Right ventricle myocardium inferior (tissue), 1 donor: ENCODE measurements at regions of chr4 and their contacts with region 1.

Region 1: GRCh38 chr4:165112368-165113139 is at the start of gene TMEM192:
- DNase-seq: peak; percentile 96
- ATAC-seq: peak; percentile 100
- total RNA-seq, gene TMEM192: 14.9 TPM

Region 2: GRCh38 chr4:165070560-165070959 is 42.0 kb before region 1 on chr4:
- intact Hi-C with region 1: no loop called
- DNase-seq: no peak
- ATAC-seq: no peak

Region 3: GRCh38 chr4:165327211-165328100 is 214.9 kb after region 1 on chr4 and contains the start of gene MSMO1:
- intact Hi-C with region 1: loop called (anchors 2 kb)
- DNase-seq: peak; percentile 100
- ATAC-seq: peak; percentile 100
- total RNA-seq, gene MSMO1: 8.5 TPM

Region 4: DNA sequence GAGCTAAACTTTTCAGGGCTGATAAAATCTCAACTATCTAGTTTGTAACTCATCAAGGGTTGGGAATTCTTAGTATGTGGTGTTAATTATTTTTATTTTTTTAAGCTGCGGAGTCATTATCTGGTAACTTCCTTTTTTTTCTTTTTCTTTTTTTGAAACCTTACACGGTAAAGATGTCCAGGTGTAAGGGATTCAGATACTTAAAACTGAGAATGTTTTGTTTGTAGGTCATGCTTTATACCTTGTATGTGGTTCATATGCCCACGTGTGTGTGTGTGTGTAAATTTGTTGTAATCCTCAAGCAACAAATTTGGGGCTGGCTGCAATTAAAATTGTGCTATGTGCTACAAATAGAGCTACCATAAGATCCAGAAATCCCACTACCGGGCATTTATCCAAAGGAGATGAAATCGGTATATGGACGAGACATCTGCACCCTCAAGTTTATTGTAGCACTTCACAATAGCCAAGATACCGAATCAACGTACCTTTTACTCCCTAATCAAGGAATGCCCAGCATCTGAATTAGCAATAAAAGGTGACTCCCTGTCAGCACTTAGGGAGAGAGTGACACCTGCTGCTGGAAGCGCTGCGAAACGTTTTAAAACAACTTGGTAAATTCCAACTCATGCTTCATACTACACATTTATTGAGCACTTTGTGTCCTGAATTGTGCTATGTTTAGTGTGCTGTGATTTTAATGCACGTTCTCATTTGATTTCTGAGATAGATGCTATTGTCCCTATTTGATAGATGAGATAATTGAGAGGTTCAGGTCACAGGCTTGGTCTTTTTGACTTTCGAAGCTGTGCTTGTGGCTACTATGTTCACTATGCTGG is 231.0 kb after region 1 on chr4:
- intact Hi-C with region 1: no loop called
- DNase-seq: no peak
- ATAC-seq: no peak